ENCODE measurements at regions of chr3 and their contacts with region 1.

Region 1: GRCh38 chr3:136075218-136075808 is 109.8 kb downstream of the PPP2R3A start:
- DNase-seq: peak; percentile 70
- ATAC-seq: 0 out of 2 replicates have a peak, but pooled peaks have one; percentile 22
- H3K4me3 ChIP-seq: no peak overlapping the region
- H3K27ac ChIP-seq: no peak overlapping the region
- H3K4me1 ChIP-seq: peaks cover 20% of the 10 kb centered on the region
- H3K27me3 ChIP-seq: no peaks in the 10 kb centered on the region
- CTCF ChIP-seq: peak; percentile 81

Region 2: DNA sequence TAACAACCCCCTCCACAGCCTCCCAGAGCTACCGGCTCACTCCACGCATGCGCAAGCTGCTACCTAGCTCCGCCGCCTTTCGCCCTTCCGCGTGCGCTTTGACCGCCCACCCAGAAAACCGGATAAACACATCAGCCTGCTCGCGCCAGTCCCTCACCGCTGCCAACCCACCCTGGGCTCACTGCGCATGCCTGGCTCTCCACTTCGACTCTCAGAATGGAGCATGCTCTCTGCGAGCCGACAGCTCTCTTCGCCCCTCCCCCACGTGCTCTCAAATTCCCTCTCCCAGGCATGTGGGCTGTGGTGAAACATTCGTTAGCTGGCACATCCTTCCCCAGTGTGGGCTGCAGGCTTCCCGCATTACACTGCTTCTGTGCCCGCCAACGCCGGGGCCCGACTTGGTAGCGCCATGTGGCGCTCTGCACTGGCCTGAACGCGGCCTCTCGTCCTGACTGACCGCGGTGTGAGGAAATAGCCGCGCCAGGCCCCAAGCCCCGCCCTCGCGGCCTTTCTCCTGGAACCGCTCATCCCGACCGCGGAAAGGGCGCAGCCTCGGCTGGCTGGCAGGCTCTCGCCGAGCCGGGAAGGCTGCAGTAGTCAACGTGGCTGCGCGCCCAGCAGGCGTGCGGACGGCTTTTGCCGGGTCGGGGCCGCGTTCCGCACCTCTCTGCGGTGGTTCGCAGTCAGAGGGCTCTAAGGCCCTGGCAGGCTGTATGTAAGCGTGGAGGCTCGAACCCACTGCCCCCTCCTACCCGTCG is 121.3 kb after region 1 on chr3:
- CTCF ChIA-PET with region 1: no interaction called
- POLR2A ChIA-PET with region 1: no interaction called
- intact Hi-C with region 1: loop called (anchors 2 kb)
- DNase-seq: peak; percentile 98
- ATAC-seq: peak; percentile 73
- H3K4me3 ChIP-seq: peak overlapping the region; percentile 100
- H3K27ac ChIP-seq: peak overlapping the region; percentile 98
- H3K4me1 ChIP-seq: peaks cover 18% of the 10 kb centered on the region
- H3K27me3 ChIP-seq: no peaks in the 10 kb centered on the region
- CTCF ChIP-seq: no peak

Region 3: DNA sequence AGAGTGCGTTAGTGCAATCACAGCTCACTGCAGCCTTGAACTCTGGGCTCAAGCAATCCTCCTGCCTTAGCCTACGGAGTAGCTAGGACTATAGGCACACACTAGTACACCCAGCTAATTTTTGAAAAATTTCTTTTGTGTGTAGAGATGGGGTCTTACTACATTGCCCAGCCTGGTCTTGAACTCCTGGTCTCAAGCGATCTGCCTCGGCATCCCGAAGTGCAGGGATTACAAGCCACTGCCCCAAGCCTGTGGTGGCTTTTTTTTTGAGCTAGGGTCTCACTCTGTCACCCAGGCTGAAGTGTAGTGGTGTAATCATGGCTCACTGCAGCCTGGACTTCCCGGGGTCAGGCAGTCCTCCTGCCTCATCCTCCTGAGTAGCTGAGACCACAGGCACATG is 191.9 kb after region 1 on chr3:
- CTCF ChIA-PET with region 1: interaction called, 5 read pairs
- POLR2A ChIA-PET with region 1: no interaction called
- intact Hi-C with region 1: loop called (anchors 5 kb)
- DNase-seq: no peak
- ATAC-seq: no peak
- H3K4me3 ChIP-seq: no peak overlapping the region
- H3K27ac ChIP-seq: peak overlapping the region; percentile 72
- H3K4me1 ChIP-seq: peaks cover 9% of the 10 kb centered on the region
- H3K27me3 ChIP-seq: no peaks in the 10 kb centered on the region
- CTCF ChIP-seq: no peak

Region 4: DNA sequence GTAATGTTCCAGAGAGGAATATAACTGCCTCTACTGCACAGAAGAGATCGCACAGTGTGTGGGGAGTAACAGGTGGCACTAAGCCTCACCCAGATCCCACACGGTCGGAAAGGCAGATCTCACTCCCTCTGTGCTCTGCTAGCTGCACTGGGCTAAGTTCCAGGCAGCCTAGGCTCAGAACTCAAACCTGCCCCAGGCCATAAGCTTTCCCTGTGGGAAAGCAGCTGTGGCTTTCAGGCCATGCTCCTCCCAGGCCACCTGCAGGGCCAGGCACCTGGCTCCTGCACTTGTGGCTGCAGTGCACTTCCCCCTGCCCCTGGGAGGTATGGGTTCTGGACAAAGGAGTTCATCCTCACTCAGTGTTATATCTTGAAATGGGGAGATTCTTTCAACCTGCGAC is 202.3 kb after region 1 on chr3:
- CTCF ChIA-PET with region 1: no interaction called
- POLR2A ChIA-PET with region 1: no interaction called
- intact Hi-C with region 1: no loop called
- DNase-seq: no peak
- ATAC-seq: no peak
- H3K4me3 ChIP-seq: no peak overlapping the region
- H3K27ac ChIP-seq: no peak overlapping the region
- H3K4me1 ChIP-seq: no peaks in the 10 kb centered on the region
- H3K27me3 ChIP-seq: no peaks in the 10 kb centered on the region
- CTCF ChIP-seq: no peak

Region 5: GRCh38 chr3:136390574-136390973 is 315.3 kb after region 1 on chr3:
- CTCF ChIA-PET with region 1: interaction called, 4 read pairs
- POLR2A ChIA-PET with region 1: no interaction called
- intact Hi-C with region 1: loop called (anchors 1 kb)
- DNase-seq: no peak
- ATAC-seq: no peak
- H3K4me3 ChIP-seq: no peak overlapping the region
- H3K27ac ChIP-seq: no peak overlapping the region
- H3K4me1 ChIP-seq: no peaks in the 10 kb centered on the region
- H3K27me3 ChIP-seq: no peaks in the 10 kb centered on the region
- CTCF ChIP-seq: no peak

Region 6: DNA sequence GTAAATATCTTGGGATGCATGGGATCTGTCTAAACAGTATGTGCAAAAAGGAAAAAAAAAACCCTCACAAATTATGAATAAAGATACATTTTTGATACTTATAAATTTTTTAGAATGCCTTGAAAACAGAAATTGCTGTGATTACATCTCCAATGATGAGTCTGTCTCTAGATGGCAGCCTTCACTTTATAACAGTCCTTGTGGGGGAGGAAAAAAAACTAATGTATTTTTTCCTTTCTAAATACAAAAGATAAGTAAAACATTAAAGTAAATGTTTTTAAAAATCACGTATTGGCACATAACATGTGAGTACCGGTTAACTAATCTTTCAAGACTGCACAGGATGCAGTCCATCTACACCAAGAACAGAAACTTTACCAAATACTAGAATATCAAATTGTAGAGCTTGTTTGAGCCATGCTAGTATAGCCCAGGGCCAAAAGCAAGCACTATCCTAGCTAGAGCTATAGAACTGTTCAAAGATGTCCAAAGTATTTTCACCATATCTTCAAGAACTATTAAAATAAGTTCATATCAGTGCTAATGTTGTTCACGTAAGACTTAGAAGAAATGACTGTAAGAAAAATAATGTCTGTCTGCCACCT is 470.5 kb after region 1 on chr3:
- CTCF ChIA-PET with region 1: no interaction called
- POLR2A ChIA-PET with region 1: no interaction called
- intact Hi-C with region 1: loop called (anchors 5 kb)
- DNase-seq: peak; percentile 30
- ATAC-seq: peak; percentile 42
- H3K4me3 ChIP-seq: no peak overlapping the region
- H3K27ac ChIP-seq: no peak overlapping the region
- H3K4me1 ChIP-seq: peaks cover 8% of the 10 kb centered on the region; the same call in 1 of the 2 replicates
- H3K27me3 ChIP-seq: no peaks in the 10 kb centered on the region
- CTCF ChIP-seq: peak; percentile 50

Region 7: GRCh38 chr3:137013955-137014688 is 938.8 kb after region 1 on chr3:
- CTCF ChIA-PET with region 1: interaction called, 3 read pairs
- POLR2A ChIA-PET with region 1: no interaction called
- intact Hi-C with region 1: loop called (anchors 1 kb)
- DNase-seq: peak; percentile 89
- ATAC-seq: peak; percentile 92
- H3K4me3 ChIP-seq: peak overlapping the region; percentile 72
- H3K27ac ChIP-seq: no peak overlapping the region
- H3K4me1 ChIP-seq: peaks cover 5% of the 10 kb centered on the region; the same call in 1 of the 2 replicates
- H3K27me3 ChIP-seq: no peaks in the 10 kb centered on the region
- CTCF ChIP-seq: peak; percentile 77